Activated CD8-positive, alpha-beta T cell treated with anti-CD3 and anti-CD28 coated beads for 36 hours (primary cell): ENCODE measurements at regions of chr12 and their contacts with region 1.

Region 1: DNA sequence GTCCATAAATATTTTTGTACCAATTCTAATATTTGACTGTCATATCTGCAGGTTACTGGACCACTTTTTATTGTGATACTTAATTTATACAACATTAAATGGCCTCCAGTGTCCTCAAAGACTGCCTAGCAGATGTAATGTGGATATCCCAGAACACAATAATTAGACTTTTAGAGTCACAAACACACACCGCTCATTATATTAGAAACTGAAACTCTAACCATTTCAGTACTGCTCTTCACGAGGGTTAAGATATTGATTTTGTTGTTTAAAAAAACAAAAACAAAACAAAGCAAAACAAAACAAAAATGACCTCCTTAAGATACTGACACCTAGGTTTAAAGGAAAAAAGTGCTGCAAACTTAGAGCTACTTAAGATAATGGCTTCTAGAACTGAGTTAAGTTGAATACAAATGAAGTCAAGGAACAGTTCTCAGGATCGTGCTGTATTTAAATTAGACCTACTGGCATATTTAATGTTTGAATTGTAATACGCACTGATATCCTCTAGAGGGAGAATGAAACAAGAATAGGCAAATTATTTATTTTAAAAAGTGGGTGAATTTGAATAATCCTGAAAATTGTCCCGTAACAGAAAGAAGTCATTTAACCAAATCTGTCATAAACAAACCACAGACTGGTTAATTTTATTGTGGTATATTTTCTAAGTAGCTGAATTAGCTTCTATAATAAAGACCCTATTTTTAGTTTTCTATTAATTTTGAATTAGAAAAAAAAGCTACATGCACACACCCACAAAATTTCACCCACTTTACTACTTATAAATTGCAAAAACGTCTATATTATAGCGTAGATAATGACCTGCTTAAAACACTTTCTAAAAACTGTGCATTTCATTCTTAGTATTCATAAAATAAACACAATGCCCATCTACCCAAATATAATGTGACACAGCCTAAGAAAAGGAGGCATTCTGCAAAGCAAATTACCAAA is 395.2 kb upstream of the DCN start:
- DNase-seq: no peak
- ATAC-seq: peak; percentile 85
- H3K4me3 Mint-ChIP-seq: peak overlapping the region; percentile 65
- H3K27ac Mint-ChIP-seq: no peak overlapping the region
- H3K4me1 Mint-ChIP-seq: peaks cover 15% of the 10 kb centered on the region
- H3K27me3 Mint-ChIP-seq: no peaks in the 10 kb centered on the region
- CTCF ChIP-seq: peak; percentile 73

Region 2: DNA sequence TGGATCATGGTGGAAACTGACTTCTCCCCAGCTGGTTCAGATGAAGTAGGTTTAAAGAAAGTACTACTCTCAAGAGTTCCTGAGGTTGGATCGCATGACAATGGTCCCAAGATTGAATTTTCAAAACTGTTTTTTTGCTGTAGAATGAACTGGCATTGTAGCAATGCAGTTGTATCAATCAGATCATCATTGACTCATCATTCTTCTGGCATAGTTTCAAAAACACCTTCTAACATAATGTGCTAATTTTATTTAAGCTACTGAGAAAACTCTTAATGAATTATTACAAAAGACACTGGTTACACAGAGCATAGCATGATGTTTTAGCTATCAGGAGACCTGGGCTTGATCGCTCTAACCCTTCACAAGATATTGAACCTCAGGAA is 10.8 kb before region 1 on chr12:
- CTCF ChIA-PET with region 1: interaction called, 15 read pairs
- POLR2A ChIA-PET with region 1: no interaction called
- intact Hi-C with region 1: no loop called
- DNase-seq: no peak
- ATAC-seq: no peak
- H3K4me3 Mint-ChIP-seq: no peak overlapping the region
- H3K27ac Mint-ChIP-seq: no peak overlapping the region
- H3K4me1 Mint-ChIP-seq: peaks cover 25% of the 10 kb centered on the region
- H3K27me3 Mint-ChIP-seq: no peaks in the 10 kb centered on the region
- CTCF ChIP-seq: no peak

Region 3: DNA sequence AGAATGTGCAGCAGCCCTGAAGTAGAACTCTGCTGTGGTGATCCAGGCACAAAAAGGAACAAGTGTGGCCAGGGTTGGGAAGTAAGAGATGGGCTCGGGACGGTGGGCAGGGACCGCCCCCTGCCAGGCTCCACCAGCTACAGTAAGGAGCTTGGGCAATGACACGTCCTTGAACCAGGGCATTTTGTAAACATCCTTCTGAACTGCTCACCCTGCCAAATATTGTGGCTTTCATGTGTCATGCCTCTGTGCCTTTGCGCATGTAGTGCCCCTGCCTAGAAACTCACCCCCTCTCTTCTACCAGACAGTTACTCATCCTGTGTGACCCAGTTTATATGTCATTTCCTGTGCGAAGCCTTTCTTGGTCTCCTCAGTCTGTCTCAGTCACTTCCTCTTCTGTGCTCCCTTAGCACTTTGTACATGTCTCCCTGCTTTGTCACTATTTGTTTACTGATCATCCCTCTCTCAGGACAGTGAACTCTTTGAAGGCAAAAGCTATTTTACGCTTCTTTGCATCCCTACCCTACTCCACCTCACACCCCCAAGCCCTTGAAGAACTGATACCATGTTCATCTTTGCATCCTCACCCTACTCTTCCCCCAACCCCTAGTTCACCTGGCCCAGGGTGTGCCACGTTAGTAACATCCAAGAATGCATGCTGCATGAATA is 1016.0 kb after region 1 on chr12:
- CTCF ChIA-PET with region 1: no interaction called
- POLR2A ChIA-PET with region 1: no interaction called
- intact Hi-C with region 1: loop called (anchors 10 kb)
- DNase-seq: peak; percentile 86
- ATAC-seq: peak; percentile 97
- H3K4me3 Mint-ChIP-seq: peak overlapping the region; percentile 46
- H3K27ac Mint-ChIP-seq: peak overlapping the region; percentile 99
- H3K4me1 Mint-ChIP-seq: peaks cover 59% of the 10 kb centered on the region
- H3K27me3 Mint-ChIP-seq: no peaks in the 10 kb centered on the region
- CTCF ChIP-seq: no peak